ENCODE measurements at regions of chr10 and their contacts with region 1.

Region 1: GRCh38 chr10:35598384-35598783 is 6.8 kb upstream of the GJD4 start:
- DNase-seq: peak; percentile 12
- H3K4me3 ChIP-seq: no peak overlapping the region
- H3K27ac ChIP-seq: no peak overlapping the region
- H3K4me1 ChIP-seq: no peaks in the 10 kb centered on the region
- H3K27me3 ChIP-seq: peaks cover 0 to 8% of the 10 kb centered on the region in 2 experiments
- CTCF ChIP-seq: peak; percentile 22 to 41
- POLR2A ChIP-seq: no peak

Region 2: GRCh38 chr10:35236739-35237138 is 361.6 kb before region 1 on chr10:
- CTCF ChIA-PET with region 1: interaction called, 4 read pairs
- POLR2A ChIA-PET with region 1: no interaction called
- dilution Hi-C with region 1: no loop called
- intact Hi-C with region 1: loop called (anchors 1 kb)
- DNase-seq: peak; percentile 26
- H3K4me3 ChIP-seq: no peak overlapping the region
- H3K27ac ChIP-seq: no peak overlapping the region
- H3K4me1 ChIP-seq: no peaks in the 10 kb centered on the region
- H3K27me3 ChIP-seq: no peaks in the 10 kb centered on the region
- CTCF ChIP-seq: peak; percentile 12 to 35
- POLR2A ChIP-seq: no peak

Region 3: DNA sequence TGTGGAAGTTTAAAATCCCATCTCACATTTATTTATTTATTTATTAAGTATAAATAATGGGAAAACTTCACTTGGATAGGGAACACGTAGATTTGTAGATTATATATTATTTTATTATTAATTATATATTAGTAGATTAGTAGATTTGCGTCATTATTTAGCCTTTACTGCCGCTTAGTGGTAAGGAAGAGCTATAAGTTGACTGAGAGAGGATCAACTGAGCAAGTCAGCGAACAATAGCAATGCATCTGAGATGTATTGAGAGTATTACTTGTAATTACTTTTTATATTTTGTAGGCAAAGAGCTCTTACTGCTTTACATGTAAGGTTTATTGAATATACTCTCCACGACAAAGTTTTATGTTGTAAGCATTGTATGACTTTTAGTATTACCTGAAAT is 1282.5 kb after region 1 on chr10:
- CTCF ChIA-PET with region 1: interaction called, 21 read pairs
- POLR2A ChIA-PET with region 1: no interaction called
- dilution Hi-C with region 1: no loop called
- intact Hi-C with region 1: no loop called
- DNase-seq: peak; percentile 20
- H3K4me3 ChIP-seq: no peak overlapping the region
- H3K27ac ChIP-seq: no peak overlapping the region
- H3K4me1 ChIP-seq: no peaks in the 10 kb centered on the region
- H3K27me3 ChIP-seq: peaks cover 0 to 4% of the 10 kb centered on the region in 2 experiments
- CTCF ChIP-seq: peak; percentile 14 to 48
- POLR2A ChIP-seq: no peak

Measured in endothelial cell of umbilical vein (primary cell).